K562 (cell line): ENCODE measurements at regions of chr19 and their contacts with region 1.

Region 1: DNA sequence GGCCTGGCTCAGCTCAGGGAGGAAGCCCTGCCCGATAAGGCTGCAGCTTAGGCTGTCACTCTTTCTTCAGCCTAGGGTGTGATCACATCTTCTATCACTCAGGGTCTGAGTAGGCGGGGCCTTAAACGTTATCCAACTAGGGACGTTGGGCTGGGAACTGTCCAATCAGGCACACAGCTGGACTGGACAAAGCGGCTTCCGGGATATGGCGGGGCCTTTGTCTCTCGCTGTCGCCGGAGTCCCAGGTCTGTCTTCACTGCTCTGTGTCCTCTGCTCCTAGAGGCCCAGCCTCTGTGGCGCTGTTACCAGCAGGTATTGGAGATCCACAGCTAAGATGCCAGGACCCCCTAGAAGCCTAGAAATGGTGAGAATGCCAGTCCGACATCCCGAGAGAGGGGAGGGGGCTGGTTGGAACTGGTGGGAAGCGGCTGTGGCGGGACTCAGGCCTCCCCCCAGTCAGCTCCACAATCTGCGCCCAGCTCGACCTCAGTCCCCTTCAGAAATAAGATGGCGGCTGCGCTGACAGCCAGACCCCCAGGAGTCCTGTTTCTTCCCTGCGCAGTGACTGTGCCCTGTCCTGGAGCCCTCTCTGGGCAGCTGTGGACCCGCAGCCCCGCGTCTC is at the start of gene ZNF254:
- DNase-seq: peak; percentile 79 to 96 (median 86)
- ATAC-seq: peak; percentile 98
- H3K4me3 ChIP-seq: peak within 1 kb of the TSS; percentile 65
- H3K27ac ChIP-seq: peak within 1 kb of the TSS; percentile 97
- H3K4me1 ChIP-seq: peaks cover 0 to 4% of the 10 kb centered on the region in 2 experiments; a peak in 2 of 5 replicates
- H3K27me3 ChIP-seq: no peaks in the 10 kb centered on the region
- CTCF ChIP-seq: no peak
- EP300 ChIP-seq: no peak
- POLR2A ChIP-seq: peak; percentile 95
- RAD21 ChIP-seq: no peak
- polyA plus RNA-seq, gene ZNF254: 10.7 to 13.8 TPM

Region 2: DNA sequence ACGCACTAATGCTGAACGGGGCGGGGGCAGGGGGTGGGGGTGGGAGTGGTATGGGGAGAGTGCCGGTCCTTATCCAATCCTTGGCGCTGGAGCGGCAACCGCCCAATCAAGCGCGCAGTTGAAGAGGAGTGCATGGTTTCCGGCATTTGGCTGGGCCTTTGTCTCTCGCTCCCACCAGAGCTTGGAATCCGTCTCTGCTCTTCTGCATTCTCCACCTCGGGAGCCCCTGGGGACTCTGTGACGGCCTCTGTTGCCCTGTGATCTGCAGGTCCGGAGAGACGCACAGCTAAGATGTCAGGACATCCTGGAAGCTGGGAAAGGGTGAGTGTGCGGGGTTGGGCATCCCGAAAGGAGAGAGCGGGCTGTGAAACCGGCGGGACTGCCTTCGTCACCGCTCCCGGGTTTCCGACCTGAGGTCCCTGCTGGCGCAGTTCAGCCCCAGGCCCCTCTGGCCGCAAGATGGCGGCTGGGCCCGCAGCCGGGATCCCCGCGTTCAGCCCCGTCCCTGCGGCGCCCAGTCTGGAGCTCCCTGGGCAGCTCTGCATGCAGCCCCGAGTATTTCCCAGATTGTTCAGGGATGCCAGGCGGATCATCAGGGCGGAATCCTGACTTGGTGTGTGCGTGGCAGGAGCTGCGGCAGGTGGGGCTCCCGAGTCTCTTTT is 53.7 kb before region 1 on chr19:
- CTCF ChIA-PET with region 1: interaction called, 4 read pairs
- POLR2A ChIA-PET with region 1: interaction called, 12 read pairs
- in situ Hi-C with region 1: no loop called
- intact Hi-C with region 1: no loop called
- DNase-seq: peak; percentile 81 to 94 (median 86)
- ATAC-seq: peak; percentile 97
- H3K4me3 ChIP-seq: peak overlapping the region; percentile 65
- H3K27ac ChIP-seq: peak overlapping the region; percentile 95
- H3K4me1 ChIP-seq: peaks cover 3 to 14% of the 10 kb centered on the region in 2 experiments; a peak in 2 of 5 replicates
- H3K27me3 ChIP-seq: no peaks in the 10 kb centered on the region
- CTCF ChIP-seq: peak in 1 of 3 experiments; percentile 12; a peak in 1 of 6 replicates
- EP300 ChIP-seq: no peak
- POLR2A ChIP-seq: peak; percentile 86
- RAD21 ChIP-seq: peak in 1 of 2 experiments; percentile 15; a peak in 1 of 4 replicates